ENCODE measurements at regions of chr2 and their contacts with region 1.

Region 1: GRCh38 chr2:55050133-55050994 is at the start of gene RTN4:
- DNase-seq: peak; percentile 95 to 99 (median 98)
- ATAC-seq: peak; percentile 88
- H3K4me3 ChIP-seq: peak within 1 kb of the TSS; percentile 79 to 87
- H3K4me3 Mint-ChIP-seq: peak within 1 kb of the TSS; percentile 100
- H3K27ac ChIP-seq: peak within 1 kb of the TSS; percentile 83 to 90
- H3K27ac Mint-ChIP-seq: peak within 1 kb of the TSS; percentile 100
- H3K4me1 ChIP-seq: peaks cover 60% of the 10 kb centered on the region
- H3K4me1 Mint-ChIP-seq: peaks cover 72% of the 10 kb centered on the region
- H3K27me3 ChIP-seq: no peaks in the 10 kb centered on the region
- H3K27me3 Mint-ChIP-seq: no peaks in the 10 kb centered on the region
- CTCF ChIP-seq: no peak
- total RNA-seq, gene RTN4: 79.7 to 81.7 TPM

Region 2: GRCh38 chr2:54115284-54116137 is 934.9 kb before region 1 on chr2 and contains the start of gene ACYP2:
- CTCF ChIA-PET with region 1: no interaction called
- POLR2A ChIA-PET with region 1: no interaction called
- intact Hi-C with region 1: loop called in 1 of 2 experiments (anchors 5 kb)
- DNase-seq: peak; percentile 77 to 96 (median 91)
- ATAC-seq: peak; percentile 81
- H3K4me3 ChIP-seq: peak within 1 kb of the TSS; percentile 75 to 93
- H3K4me3 Mint-ChIP-seq: peak within 1 kb of the TSS; percentile 98
- H3K27ac ChIP-seq: peak within 1 kb of the TSS; percentile 94 to 98
- H3K27ac Mint-ChIP-seq: peak within 1 kb of the TSS; percentile 100
- H3K4me1 ChIP-seq: peaks cover 5% of the 10 kb centered on the region
- H3K4me1 Mint-ChIP-seq: peaks cover 22% of the 10 kb centered on the region
- H3K27me3 ChIP-seq: no peaks in the 10 kb centered on the region
- H3K27me3 Mint-ChIP-seq: no peaks in the 10 kb centered on the region
- CTCF ChIP-seq: no peak
- total RNA-seq, gene ACYP2: 10.2 to 10.4 TPM

Region 3: GRCh38 chr2:54723131-54723995 is 327.0 kb before region 1 on chr2 and contains the start of gene EML6:
- CTCF ChIA-PET with region 1: no interaction called
- POLR2A ChIA-PET with region 1: no interaction called
- intact Hi-C with region 1: loop called (anchors 1 to 5 kb)
- DNase-seq: peak; percentile 95 to 99 (median 98)
- ATAC-seq: peak; percentile 95
- H3K4me3 ChIP-seq: peak within 1 kb of the TSS; percentile 70 to 72
- H3K4me3 Mint-ChIP-seq: peak within 1 kb of the TSS; percentile 93
- H3K27ac ChIP-seq: peak within 1 kb of the TSS; percentile 43 to 53
- H3K27ac Mint-ChIP-seq: peak within 1 kb of the TSS; percentile 69
- H3K4me1 ChIP-seq: peaks cover 12% of the 10 kb centered on the region
- H3K4me1 Mint-ChIP-seq: peaks cover 17% of the 10 kb centered on the region
- H3K27me3 ChIP-seq: peaks cover 0 to 11% of the 10 kb centered on the region in 2 experiments
- H3K27me3 Mint-ChIP-seq: peaks cover 27% of the 10 kb centered on the region
- CTCF ChIP-seq: no peak
- total RNA-seq, gene EML6: 0.35 to 0.81 TPM

Region 4: DNA sequence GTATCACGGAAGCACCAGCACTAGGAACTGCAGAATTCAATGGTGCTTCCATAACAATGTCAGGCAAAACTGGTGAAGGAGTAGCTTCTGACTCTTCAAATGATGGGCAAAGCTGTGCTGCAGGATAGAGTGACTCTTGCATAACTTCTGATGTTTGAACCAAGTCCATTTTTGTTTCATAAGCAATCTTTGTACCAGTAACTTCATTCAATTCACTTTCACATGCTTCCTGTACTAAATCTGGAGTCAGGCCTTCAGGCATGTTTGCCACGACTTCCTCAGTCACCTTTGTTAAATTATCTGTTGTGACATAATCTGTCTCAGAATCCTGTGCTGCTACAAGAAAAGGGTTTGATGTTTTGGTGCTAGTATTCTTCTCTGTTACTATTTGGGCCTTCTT is 24.2 kb before region 1 on chr2:
- CTCF ChIA-PET with region 1: interaction called, 5 read pairs
- POLR2A ChIA-PET with region 1: interaction called, 5 read pairs
- intact Hi-C with region 1: loop called (anchors 2 kb)
- DNase-seq: no peak
- ATAC-seq: peak; percentile 38
- H3K4me3 ChIP-seq: no peak overlapping the region
- H3K4me3 Mint-ChIP-seq: no peak overlapping the region
- H3K27ac ChIP-seq: no peak overlapping the region
- H3K27ac Mint-ChIP-seq: peak overlapping the region; percentile 30
- H3K4me1 ChIP-seq: peaks cover 61% of the 10 kb centered on the region
- H3K4me1 Mint-ChIP-seq: peaks cover 21% of the 10 kb centered on the region
- H3K27me3 ChIP-seq: no peaks in the 10 kb centered on the region
- H3K27me3 Mint-ChIP-seq: no peaks in the 10 kb centered on the region
- CTCF ChIP-seq: no peak

Region 5: GRCh38 chr2:55168221-55169154 is 118.1 kb after region 1 on chr2:
- CTCF ChIA-PET with region 1: interaction called, 39 read pairs
- POLR2A ChIA-PET with region 1: interaction called, 3 read pairs
- intact Hi-C with region 1: loop called in 1 of 2 experiments (anchors 10 kb)
- DNase-seq: peak in 8 of 9 experiments; percentile 14 to 71 (median 46)
- ATAC-seq: peak; percentile 75
- H3K4me3 ChIP-seq: no peak overlapping the region
- H3K4me3 Mint-ChIP-seq: no peak overlapping the region
- H3K27ac ChIP-seq: no peak overlapping the region
- H3K27ac Mint-ChIP-seq: no peak overlapping the region
- H3K4me1 ChIP-seq: no peaks in the 10 kb centered on the region
- H3K4me1 Mint-ChIP-seq: peaks cover 3% of the 10 kb centered on the region
- H3K27me3 ChIP-seq: no peaks in the 10 kb centered on the region
- H3K27me3 Mint-ChIP-seq: no peaks in the 10 kb centered on the region
- CTCF ChIP-seq: peak; percentile 80

Region 6: GRCh38 chr2:55282110-55282917 is 231.9 kb after region 1 on chr2:
- CTCF ChIA-PET with region 1: no interaction called
- POLR2A ChIA-PET with region 1: no interaction called
- intact Hi-C with region 1: loop called (anchors 5 kb)
- DNase-seq: peak; percentile 77 to 93 (median 87)
- ATAC-seq: peak; percentile 99
- H3K4me3 ChIP-seq: peak overlapping the region; percentile 62 to 70
- H3K4me3 Mint-ChIP-seq: peak overlapping the region; percentile 94
- H3K27ac ChIP-seq: peak overlapping the region; percentile 72 to 96
- H3K27ac Mint-ChIP-seq: peak overlapping the region; percentile 99
- H3K4me1 ChIP-seq: peaks cover 7% of the 10 kb centered on the region
- H3K4me1 Mint-ChIP-seq: peaks cover 31% of the 10 kb centered on the region
- H3K27me3 ChIP-seq: no peaks in the 10 kb centered on the region
- H3K27me3 Mint-ChIP-seq: no peaks in the 10 kb centered on the region
- CTCF ChIP-seq: no peak

Region 7: DNA sequence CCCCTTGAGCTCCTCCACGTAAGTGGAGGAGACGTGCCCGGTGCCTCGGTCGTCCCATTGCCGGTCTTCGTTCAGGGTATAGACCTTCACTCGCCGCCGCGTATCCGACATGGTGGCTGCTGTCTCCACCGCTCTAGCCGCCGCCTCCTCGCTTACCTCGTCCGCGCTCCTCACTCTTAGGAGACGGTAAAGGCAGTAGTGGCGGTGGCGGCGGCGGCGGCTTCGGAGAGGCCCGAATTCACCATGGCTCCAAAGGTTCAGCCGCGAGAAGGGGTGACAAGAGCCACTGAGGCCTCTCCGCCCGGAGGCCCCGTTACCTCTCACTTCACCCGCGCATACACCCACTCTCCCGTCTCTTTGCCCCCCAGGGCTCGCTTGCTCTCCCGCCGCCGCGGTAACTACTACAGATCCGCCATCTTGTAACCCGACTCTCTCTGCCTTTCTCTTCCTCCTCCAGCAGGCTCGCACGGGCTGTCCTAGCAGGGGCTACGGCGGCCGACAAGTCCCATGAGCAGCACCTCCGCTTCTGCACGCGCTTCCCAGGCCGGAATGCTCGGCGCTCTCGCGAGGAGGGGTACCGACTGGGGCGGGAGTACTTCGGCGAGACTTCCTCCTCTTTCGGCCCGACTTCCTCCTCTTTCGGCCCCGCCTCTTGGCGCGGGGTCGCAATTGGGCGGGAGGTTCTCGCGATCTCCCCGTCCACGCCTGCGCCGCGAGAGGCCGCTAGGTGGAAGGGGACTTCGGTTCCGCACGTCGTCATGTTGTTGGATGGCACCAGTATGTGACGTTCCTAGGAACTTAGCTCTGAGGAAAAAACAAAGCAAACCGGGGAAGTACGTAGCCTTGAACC is 567.0 kb after region 1 on chr2 and contains the start of gene PPP4R3B:
- CTCF ChIA-PET with region 1: no interaction called
- POLR2A ChIA-PET with region 1: no interaction called
- intact Hi-C with region 1: loop called in 1 of 2 experiments (anchors 5 kb)
- DNase-seq: peak; percentile 96 to 100 (median 98)
- ATAC-seq: peak; percentile 83
- H3K4me3 ChIP-seq: peak within 1 kb of the TSS; percentile 95 to 97
- H3K4me3 Mint-ChIP-seq: no peak within 1 kb of the TSS
- H3K27ac ChIP-seq: peak within 1 kb of the TSS; percentile 97 to 99
- H3K27ac Mint-ChIP-seq: no peak within 1 kb of the TSS
- H3K4me1 ChIP-seq: peaks cover 50% of the 10 kb centered on the region
- H3K4me1 Mint-ChIP-seq: peaks cover 63% of the 10 kb centered on the region
- H3K27me3 ChIP-seq: no peaks in the 10 kb centered on the region
- H3K27me3 Mint-ChIP-seq: no peaks in the 10 kb centered on the region
- CTCF ChIP-seq: peak; percentile 21
- total RNA-seq, gene PPP4R3B: 39.0 to 43.9 TPM

Measured in CD8-positive, alpha-beta T cell (primary cell).